OCI-LY7 (cell line): ENCODE measurements at regions of chr21 and their contacts with region 1.

Region 1: GRCh38 chr21:16082038-16082816 is 352.4 kb downstream of the USP25 start:
- DNase-seq: peak; percentile 43
- H3K4me3 ChIP-seq: no peak overlapping the region
- H3K27ac ChIP-seq: no peak overlapping the region
- H3K4me1 ChIP-seq: no peaks in the 10 kb centered on the region
- CTCF ChIP-seq: peak; percentile 79

Region 2: DNA sequence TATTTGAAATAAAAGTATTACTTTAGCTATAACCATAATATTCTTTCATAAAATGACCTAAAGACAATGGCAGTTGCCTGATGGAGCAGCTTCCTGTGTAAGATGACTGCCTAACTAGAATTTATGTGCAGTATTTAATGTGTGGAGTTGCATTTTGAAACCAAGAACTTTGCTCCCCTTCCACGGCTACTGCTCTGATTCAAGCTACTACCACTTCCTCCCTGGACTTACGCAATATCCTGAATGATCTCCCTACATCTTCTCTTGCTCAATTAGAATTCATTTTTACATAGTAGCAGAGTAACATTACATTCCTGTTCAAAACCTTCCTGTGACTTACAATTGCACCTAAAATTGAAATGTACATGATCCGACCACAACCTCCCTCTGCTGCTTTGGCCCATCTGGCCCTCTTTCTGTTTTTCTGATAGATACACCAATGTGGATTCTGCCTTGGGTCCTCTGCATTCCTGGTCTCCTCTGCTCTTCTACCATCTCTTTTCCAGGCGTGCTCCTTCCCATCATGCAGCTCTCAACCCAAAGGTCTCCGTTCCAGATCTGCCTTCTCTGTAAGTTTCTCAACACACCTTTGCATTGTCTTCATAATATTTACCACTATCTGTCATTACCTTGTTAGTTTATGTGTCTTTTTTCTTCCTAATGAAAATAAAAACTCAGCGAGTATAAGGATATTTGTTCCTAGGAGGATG is 399.9 kb before region 1 on chr21:
- CTCF ChIA-PET with region 1: no interaction called
- POLR2A ChIA-PET with region 1: no interaction called
- intact Hi-C with region 1: no loop called
- DNase-seq: no peak
- H3K4me3 ChIP-seq: no peak overlapping the region
- H3K27ac ChIP-seq: no peak overlapping the region
- H3K4me1 ChIP-seq: no peaks in the 10 kb centered on the region
- CTCF ChIP-seq: no peak

Region 3: GRCh38 chr21:15809818-15810217 is 272.4 kb before region 1 on chr21:
- CTCF ChIA-PET with region 1: no interaction called
- POLR2A ChIA-PET with region 1: no interaction called
- intact Hi-C with region 1: no loop called
- DNase-seq: no peak
- H3K4me3 ChIP-seq: no peak overlapping the region
- H3K27ac ChIP-seq: no peak overlapping the region
- H3K4me1 ChIP-seq: no peaks in the 10 kb centered on the region
- CTCF ChIP-seq: no peak

Region 4: GRCh38 chr21:16028142-16028541 is 54.1 kb before region 1 on chr21:
- CTCF ChIA-PET with region 1: no interaction called
- POLR2A ChIA-PET with region 1: interaction called, 12 read pairs
- intact Hi-C with region 1: no loop called
- DNase-seq: no peak
- H3K4me3 ChIP-seq: no peak overlapping the region
- H3K27ac ChIP-seq: no peak overlapping the region
- H3K4me1 ChIP-seq: no peaks in the 10 kb centered on the region
- CTCF ChIP-seq: no peak

Region 5: DNA sequence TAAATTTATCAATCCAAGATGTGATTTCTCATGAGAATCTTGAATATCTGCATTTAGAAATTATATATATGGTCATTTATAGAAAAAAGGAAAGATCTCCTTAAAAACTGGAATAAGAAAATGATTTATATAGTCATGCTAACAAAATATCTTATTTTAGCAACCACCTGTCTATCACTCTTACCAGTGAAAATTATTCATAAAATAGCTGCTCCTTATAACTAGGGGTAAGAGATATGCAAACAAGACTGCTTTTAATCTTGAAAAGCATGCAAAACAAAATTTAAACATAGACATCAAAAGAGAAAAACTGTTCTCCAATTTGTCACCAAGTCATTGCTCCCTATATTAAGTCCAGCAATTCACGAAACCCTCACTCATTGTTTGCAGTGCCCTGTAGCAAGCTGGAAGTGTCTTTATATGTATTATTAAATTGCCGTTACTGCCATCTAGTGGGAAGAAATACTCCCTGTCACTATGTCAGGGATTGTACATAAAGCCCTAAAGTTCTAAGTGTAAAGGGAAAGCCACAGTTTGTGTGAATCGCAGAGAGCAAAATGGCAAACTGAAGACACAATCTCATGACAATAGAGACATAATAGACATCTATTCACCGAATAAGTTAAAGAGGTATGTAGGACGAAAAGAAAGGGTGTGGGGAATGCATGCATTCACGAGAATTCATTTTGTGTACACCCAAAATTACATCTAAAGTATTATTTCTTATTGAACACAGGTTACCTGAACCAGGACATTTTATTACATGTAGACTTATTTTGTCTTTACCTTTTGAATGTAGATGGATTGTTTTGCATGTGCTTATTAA is 248.1 kb after region 1 on chr21:
- CTCF ChIA-PET with region 1: no interaction called
- POLR2A ChIA-PET with region 1: no interaction called
- intact Hi-C with region 1: loop called (anchors 2 kb)
- DNase-seq: peak; percentile 56
- H3K4me3 ChIP-seq: no peak overlapping the region
- H3K27ac ChIP-seq: no peak overlapping the region
- H3K4me1 ChIP-seq: no peaks in the 10 kb centered on the region
- CTCF ChIP-seq: peak; percentile 86